Motor neuron (in vitro differentiated cells): ENCODE measurements at regions of chr18 and their contacts with region 1.

Region 1: GRCh38 chr18:9136315-9137155 is at the start of gene ANKRD12:
- ATAC-seq: peak; percentile 65 to 82 (median 79)
- H3K4me3 ChIP-seq: peak within 1 kb of the TSS; percentile 56 to 98 (median 92)
- H3K27ac ChIP-seq: peak within 1 kb of the TSS; percentile 90
- H3K4me1 ChIP-seq: peaks cover 9 to 27% of the 10 kb centered on the region in 2 donors
- total RNA-seq, gene ANKRD12: 18.5 to 48.5 (median 35.9) TPM

Region 2: GRCh38 chr18:9025091-9025838 is 111.3 kb before region 1 on chr18:
- in situ Hi-C with region 1: loop called in 1 of 9 experiments (anchors 25 kb)
- ATAC-seq: peak in 2 of 8 experiments; percentile 29 to 73
- H3K4me3 ChIP-seq: no peak overlapping the region
- H3K27ac ChIP-seq: no peak overlapping the region
- H3K4me1 ChIP-seq: no peaks in the 10 kb centered on the region

Region 3: GRCh38 chr18:9433671-9434121 is 297.2 kb after region 1 on chr18:
- in situ Hi-C with region 1: no loop called
- ATAC-seq: peak in 6 of 8 experiments; percentile 32 to 85 (median 78)
- H3K4me3 ChIP-seq: no peak overlapping the region
- H3K27ac ChIP-seq: peak overlapping the region; percentile 72 to 86
- H3K4me1 ChIP-seq: peaks cover 12 to 15% of the 10 kb centered on the region in 2 donors

Region 4: DNA sequence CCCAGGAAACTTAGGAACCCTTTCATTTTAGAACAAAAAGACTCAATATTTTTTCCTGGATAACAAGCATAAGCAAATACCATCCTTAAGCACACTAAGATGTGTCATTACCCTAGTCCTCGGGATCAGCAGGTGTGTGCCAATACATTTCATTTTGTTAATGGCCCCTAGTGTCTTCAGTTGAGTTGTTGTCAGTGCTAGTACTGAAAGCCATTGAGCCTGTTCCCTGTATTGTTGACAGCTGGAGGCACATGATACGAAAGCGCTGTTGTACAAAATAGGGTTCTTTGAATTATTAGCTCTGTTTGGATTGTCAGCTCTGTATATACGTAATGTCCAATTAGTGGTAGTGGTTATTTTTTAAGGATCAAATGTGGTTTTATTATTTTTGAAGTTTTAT is 806.8 kb after region 1 on chr18:
- in situ Hi-C with region 1: no loop called
- ATAC-seq: peak in 2 of 8 experiments; percentile 28 to 39
- H3K4me3 ChIP-seq: no peak overlapping the region
- H3K27ac ChIP-seq: no peak overlapping the region
- H3K4me1 ChIP-seq: no peaks in the 10 kb centered on the region